ENCODE measurements at regions of chr2 and their contacts with region 1.

Region 1: GRCh38 chr2:165293440-165294353 is 54.5 kb downstream of the SCN2A start:
- DNase-seq: peak; percentile 73
- H3K4me3 ChIP-seq: peak overlapping the region; percentile 50
- H3K27ac ChIP-seq: no peak overlapping the region
- H3K27me3 ChIP-seq: no peaks in the 10 kb centered on the region
- CTCF ChIP-seq: peak; percentile 87

Region 2: GRCh38 chr2:164782323-164782722 is 511.4 kb before region 1 on chr2:
- CTCF ChIA-PET with region 1: interaction called, 10 read pairs
- POLR2A ChIA-PET with region 1: no interaction called
- DNase-seq: no peak
- H3K4me3 ChIP-seq: no peak overlapping the region
- H3K27ac ChIP-seq: no peak overlapping the region
- H3K27me3 ChIP-seq: no peaks in the 10 kb centered on the region
- CTCF ChIP-seq: no peak

Region 3: DNA sequence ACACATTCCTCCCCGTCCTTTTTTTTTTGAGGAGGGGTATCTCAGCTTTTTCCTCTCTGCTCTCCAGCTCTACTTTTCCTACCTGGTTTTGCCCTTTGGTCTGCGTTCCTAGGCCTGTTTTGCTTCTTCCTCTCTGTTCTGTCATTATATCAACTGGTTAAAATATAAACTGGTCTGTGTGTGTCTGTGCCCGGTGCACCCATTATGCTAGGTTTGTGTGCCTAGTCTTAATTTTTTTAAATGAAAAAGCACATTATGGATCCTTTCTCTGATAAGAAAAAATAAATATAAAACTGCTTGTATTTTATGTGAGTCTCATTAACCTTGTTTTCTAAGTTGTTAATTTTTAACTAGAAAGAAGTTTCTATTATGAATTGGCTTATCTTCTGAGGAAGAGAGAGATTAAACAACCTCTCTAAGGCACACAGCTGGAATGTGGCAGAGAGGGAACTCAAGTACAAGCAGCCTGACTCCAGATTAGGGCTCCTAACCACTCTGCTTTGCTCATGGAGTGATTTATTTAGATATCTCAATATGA is 355.8 kb before region 1 on chr2:
- CTCF ChIA-PET with region 1: no interaction called
- POLR2A ChIA-PET with region 1: no interaction called
- DNase-seq: no peak
- H3K4me3 ChIP-seq: no peak overlapping the region
- H3K27ac ChIP-seq: no peak overlapping the region
- H3K27me3 ChIP-seq: no peaks in the 10 kb centered on the region
- CTCF ChIP-seq: no peak

Region 4: DNA sequence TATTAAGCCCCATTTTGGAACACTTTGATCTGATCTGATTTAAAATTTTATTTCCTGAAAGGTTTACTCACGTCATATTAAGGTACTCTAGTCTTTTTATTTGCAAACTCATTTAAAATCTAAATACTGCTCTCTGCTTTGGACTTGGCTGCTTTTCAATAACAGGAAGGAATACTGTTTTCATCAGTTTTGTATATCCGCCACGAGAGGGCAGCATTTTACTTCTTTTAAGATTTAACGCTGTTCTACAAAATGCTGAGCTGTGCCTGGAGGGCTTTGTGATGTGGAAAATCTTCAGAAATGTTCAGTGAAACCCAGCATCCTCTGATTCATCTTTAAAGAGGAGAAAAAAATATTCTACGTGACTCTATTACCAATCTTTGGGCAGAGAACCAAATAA is 300.9 kb before region 1 on chr2:
- CTCF ChIA-PET with region 1: interaction called, 21 read pairs
- POLR2A ChIA-PET with region 1: no interaction called
- DNase-seq: peak; percentile 61
- H3K4me3 ChIP-seq: no peak overlapping the region
- H3K27ac ChIP-seq: no peak overlapping the region
- H3K27me3 ChIP-seq: no peaks in the 10 kb centered on the region
- CTCF ChIP-seq: peak; percentile 49

Region 5: GRCh38 chr2:165015052-165015642 is 278.6 kb before region 1 on chr2:
- CTCF ChIA-PET with region 1: interaction called, 27 read pairs
- POLR2A ChIA-PET with region 1: no interaction called
- DNase-seq: peak; percentile 34
- H3K4me3 ChIP-seq: no peak overlapping the region
- H3K27ac ChIP-seq: no peak overlapping the region
- H3K27me3 ChIP-seq: no peaks in the 10 kb centered on the region
- CTCF ChIP-seq: peak; percentile 96

Region 6: DNA sequence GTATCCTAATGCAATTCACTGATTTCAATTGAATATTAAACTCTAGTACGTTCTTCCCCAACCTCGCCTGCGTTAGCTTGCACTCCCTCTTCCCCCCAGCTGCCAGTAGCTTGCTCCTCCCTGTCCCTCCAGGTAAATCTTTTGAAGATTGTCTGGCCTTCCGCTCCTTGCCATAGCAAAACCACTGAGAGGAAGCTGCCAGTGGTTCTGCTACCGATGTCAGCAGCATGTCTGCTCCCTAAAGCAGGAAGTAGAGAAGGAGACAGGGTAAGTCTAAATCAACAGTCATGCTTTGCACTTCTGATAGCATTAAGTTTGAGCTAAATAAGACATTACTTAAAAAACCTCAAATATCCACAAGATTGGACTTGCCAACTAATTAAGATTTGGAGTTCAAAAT is 34.6 kb after region 1 on chr2:
- CTCF ChIA-PET with region 1: interaction called, 11 read pairs
- POLR2A ChIA-PET with region 1: no interaction called
- DNase-seq: no peak
- H3K4me3 ChIP-seq: no peak overlapping the region
- H3K27ac ChIP-seq: no peak overlapping the region
- H3K27me3 ChIP-seq: no peaks in the 10 kb centered on the region
- CTCF ChIP-seq: no peak